HCT116 (cell line): ENCODE measurements at regions of chr12 and their contacts with region 1.

Region 1: DNA sequence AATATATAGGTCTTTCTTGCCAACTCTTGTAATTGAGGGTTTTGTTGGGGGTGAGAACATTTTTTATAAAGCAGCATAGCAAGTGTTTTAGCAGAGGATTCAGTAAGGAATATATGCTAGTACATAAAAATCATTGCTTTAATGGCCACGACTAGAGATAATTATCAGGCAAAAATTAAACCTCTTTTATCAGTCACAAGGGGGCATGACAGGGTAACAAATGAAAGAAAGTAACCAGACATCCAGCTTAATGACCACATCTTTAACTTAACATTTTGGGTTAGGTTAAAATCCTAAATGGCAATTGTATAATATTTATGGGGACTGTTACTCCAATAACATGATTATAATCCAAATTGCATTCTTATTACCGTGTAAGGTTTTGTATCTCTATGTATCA is 119.6 kb downstream of the LRRIQ1 start:
- DNase-seq: peak; percentile 31
- ATAC-seq: peak; percentile 63
- H3K4me3 ChIP-seq: no peak overlapping the region
- H3K27ac ChIP-seq: no peak overlapping the region
- H3K4me1 ChIP-seq: no peaks in the 10 kb centered on the region
- H3K27me3 ChIP-seq: no peaks in the 10 kb centered on the region
- CTCF ChIP-seq: peak; percentile 29 to 62 (median 42); a peak in 4 of 6 replicates
- POLR2A ChIP-seq: no peak
- RAD21 ChIP-seq: peak; percentile 67

Region 2: DNA sequence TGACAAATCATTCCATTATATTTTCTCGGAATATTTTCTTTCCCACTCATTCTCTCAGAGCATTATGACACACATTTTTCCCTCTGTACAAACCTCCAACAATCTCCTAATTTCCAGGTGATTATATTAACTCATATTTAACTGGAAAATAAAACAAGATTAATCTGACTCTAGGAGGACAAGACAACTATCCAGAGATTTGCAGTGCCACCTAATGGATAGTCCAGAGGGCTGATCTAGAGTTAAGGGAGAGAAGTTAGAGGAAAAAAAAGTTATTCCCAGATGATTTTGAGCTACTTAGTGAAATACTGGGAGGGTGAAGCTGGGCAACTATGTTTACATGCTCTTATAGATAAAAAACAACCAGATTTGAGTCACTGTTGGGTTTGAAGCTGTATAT is 286.0 kb after region 1 on chr12:
- CTCF ChIA-PET with region 1: interaction called, 10 read pairs
- POLR2A ChIA-PET with region 1: no interaction called
- RAD21 ChIA-PET with region 1: interaction called, 3 to 4 read pairs
- intact Hi-C with region 1: loop called (anchors 2 kb)
- DNase-seq: peak; percentile 16
- ATAC-seq: peak; percentile 69
- H3K4me3 ChIP-seq: no peak overlapping the region
- H3K27ac ChIP-seq: no peak overlapping the region
- H3K4me1 ChIP-seq: no peaks in the 10 kb centered on the region
- H3K27me3 ChIP-seq: no peaks in the 10 kb centered on the region
- CTCF ChIP-seq: peak; percentile 48 to 57 (median 55); a peak in 5 of 6 replicates
- POLR2A ChIP-seq: no peak
- RAD21 ChIP-seq: peak; percentile 61